Ovary (tissue), 10 donors: ENCODE measurements at regions of chrX and their contacts with region 1.

Region 1: DNA sequence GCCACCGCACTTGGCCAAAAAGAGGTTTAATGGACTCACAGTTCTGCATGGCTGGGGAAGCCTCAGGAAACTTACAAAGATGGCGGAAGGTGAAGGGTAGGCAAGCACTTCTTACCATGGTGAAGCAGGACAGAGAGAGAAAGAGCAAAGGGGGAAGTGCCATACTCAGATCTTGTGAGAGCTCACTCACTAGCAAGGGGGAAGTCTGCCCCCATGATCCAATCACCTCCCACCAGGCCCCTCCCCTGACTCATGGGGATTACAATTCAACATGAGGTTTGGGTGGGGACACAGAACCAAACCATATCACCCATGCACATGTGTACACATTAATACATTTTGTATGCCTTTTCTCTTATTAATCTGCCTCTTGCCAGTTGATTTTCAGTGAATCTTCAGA is 77.2 kb upstream of the HSD17B10 start:
- DNase-seq: no peak
- H3K4me3 ChIP-seq: no peak overlapping the region
- H3K27ac ChIP-seq: no peak overlapping the region
- H3K4me1 ChIP-seq: no peaks in the 10 kb centered on the region
- H3K27me3 ChIP-seq: no peaks in the 10 kb centered on the region
- CTCF ChIP-seq: no peak
- EP300 ChIP-seq: no peak
- POLR2A ChIP-seq: no peak

Region 2: DNA sequence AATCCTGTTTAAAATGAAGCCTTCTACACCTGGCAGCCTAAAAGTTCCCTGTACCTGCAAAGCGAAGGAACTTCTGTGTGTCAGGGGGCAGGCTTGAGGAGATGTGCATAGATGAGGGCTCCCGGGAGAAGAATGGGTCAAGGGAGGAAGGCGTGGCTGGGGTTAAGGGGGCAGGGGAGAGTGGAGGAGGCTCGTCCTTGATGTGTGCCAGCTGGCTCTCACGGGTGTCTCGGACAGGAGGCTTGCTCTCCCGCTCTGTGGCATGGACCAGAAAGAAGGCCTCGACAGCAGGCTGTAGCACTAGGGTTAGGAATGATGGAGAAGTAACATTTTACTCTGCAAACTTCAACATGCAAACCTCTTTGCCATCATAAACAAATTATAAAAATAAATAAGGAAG is 27.5 kb after region 1 on chrX:
- intact Hi-C with region 1: loop called in 1 of 4 experiments (anchors 1 kb)
- DNase-seq: peak; percentile 28 to 57 (median 35)
- H3K4me3 ChIP-seq: no peak overlapping the region
- H3K27ac ChIP-seq: no peak overlapping the region
- H3K4me1 ChIP-seq: no peaks in the 10 kb centered on the region
- H3K27me3 ChIP-seq: no peaks in the 10 kb centered on the region
- CTCF ChIP-seq: no peak
- EP300 ChIP-seq: no peak
- POLR2A ChIP-seq: no peak

Region 3: GRCh38 chrX:53831662-53832635 is 320.6 kb after region 1 on chrX:
- intact Hi-C with region 1: no loop called
- DNase-seq: no peak
- H3K4me3 ChIP-seq: no peak overlapping the region
- H3K27ac ChIP-seq: no peak overlapping the region
- H3K4me1 ChIP-seq: no peaks in the 10 kb centered on the region
- H3K27me3 ChIP-seq: no peaks in the 10 kb centered on the region
- CTCF ChIP-seq: no peak
- EP300 ChIP-seq: no peak
- POLR2A ChIP-seq: no peak